Activated CD4-positive, alpha-beta memory T cell treated with anti-CD3 and anti-CD28 coated beads for 36 hours (primary cell): ENCODE measurements at regions of chr3 and their contacts with region 1.

Region 1: GRCh38 chr3:112043603-112044201 is 9.2 kb downstream of the TMPRSS7 start:
- DNase-seq: peak; percentile 62
- H3K4me3 Mint-ChIP-seq: no peak overlapping the region
- H3K27ac Mint-ChIP-seq: no peak overlapping the region
- H3K4me1 Mint-ChIP-seq: peaks cover 2% of the 10 kb centered on the region
- H3K27me3 Mint-ChIP-seq: no peaks in the 10 kb centered on the region

Region 2: DNA sequence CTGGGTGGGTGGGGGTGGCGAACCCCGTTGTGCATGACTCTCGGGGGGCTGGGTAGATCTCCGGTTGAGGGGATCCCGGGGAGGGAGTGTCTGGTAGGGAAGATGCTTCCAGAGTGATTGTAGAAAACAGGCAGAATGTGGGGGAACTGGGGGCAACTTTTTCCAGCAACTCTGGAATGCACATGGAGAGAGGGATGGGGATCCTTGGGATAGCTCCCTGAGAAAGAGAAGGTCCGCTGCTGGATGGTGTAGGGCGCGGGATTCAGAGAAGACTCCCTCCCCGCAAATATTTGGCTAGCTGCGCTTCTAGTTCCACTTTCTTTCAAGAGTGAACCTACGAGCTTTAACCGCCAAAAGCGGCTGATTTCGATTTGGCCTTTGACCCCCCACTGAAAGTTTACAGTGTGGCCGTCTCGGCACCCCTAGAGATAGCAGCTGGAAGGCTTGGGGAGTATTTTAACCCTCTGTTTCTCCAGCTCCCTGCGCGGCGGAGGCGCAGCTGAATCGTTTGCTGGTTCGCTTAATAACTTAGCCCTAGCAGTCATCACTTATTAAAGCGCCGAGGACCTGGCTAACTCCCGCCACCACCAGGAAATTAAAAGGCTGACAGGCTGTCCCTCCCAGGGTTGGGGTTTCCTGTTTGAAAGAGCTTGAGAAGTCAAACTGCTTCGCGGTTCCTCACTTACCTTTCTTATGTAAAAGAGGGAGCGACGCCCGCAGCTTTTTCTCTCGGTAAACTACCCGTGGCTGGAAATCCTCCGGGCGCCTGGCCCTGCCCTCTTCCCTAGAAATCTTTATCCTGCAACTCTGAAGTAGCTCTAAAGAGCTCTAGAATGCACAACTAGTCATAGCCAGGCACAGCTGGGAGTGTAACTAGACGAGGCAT is 183.5 kb before region 1 on chr3:
- CTCF ChIA-PET with region 1: interaction called, 5 read pairs
- POLR2A ChIA-PET with region 1: no interaction called
- intact Hi-C with region 1: loop called (anchors 10 kb)
- DNase-seq: peak; percentile 71
- H3K4me3 Mint-ChIP-seq: peak overlapping the region; percentile 79
- H3K27ac Mint-ChIP-seq: no peak overlapping the region
- H3K4me1 Mint-ChIP-seq: peaks cover 13% of the 10 kb centered on the region
- H3K27me3 Mint-ChIP-seq: peaks cover 7% of the 10 kb centered on the region

Region 3: GRCh38 chr3:111998636-111999483 is 44.8 kb before region 1 on chr3 and contains the start of gene TAGLN3:
- CTCF ChIA-PET with region 1: interaction called, 4 read pairs
- POLR2A ChIA-PET with region 1: interaction called, 3 read pairs
- intact Hi-C with region 1: loop called (anchors 5 kb)
- DNase-seq: no peak
- H3K4me3 Mint-ChIP-seq: peak within 1 kb of the TSS; percentile 34
- H3K27ac Mint-ChIP-seq: no peak within 1 kb of the TSS
- H3K4me1 Mint-ChIP-seq: peaks cover 39% of the 10 kb centered on the region
- H3K27me3 Mint-ChIP-seq: no peaks in the 10 kb centered on the region
- total RNA-seq, gene TAGLN3: 0.78 to 0.85 TPM

Region 4: GRCh38 chr3:112020674-112021085 is 23.0 kb before region 1 on chr3:
- CTCF ChIA-PET with region 1: interaction called, 50 read pairs
- POLR2A ChIA-PET with region 1: no interaction called
- intact Hi-C with region 1: loop called (anchors 2 kb)
- DNase-seq: no peak
- H3K4me3 Mint-ChIP-seq: no peak overlapping the region
- H3K27ac Mint-ChIP-seq: no peak overlapping the region
- H3K4me1 Mint-ChIP-seq: peaks cover 4% of the 10 kb centered on the region
- H3K27me3 Mint-ChIP-seq: no peaks in the 10 kb centered on the region

Region 5: GRCh38 chr3:112056451-112056978 is 12.8 kb after region 1 on chr3:
- CTCF ChIA-PET with region 1: interaction called, 16 read pairs
- POLR2A ChIA-PET with region 1: no interaction called
- intact Hi-C with region 1: no loop called
- DNase-seq: peak; percentile 53
- H3K4me3 Mint-ChIP-seq: peak overlapping the region; percentile 1
- H3K27ac Mint-ChIP-seq: peak overlapping the region; percentile 25
- H3K4me1 Mint-ChIP-seq: peaks cover 25% of the 10 kb centered on the region
- H3K27me3 Mint-ChIP-seq: peaks cover 11% of the 10 kb centered on the region

Region 6: DNA sequence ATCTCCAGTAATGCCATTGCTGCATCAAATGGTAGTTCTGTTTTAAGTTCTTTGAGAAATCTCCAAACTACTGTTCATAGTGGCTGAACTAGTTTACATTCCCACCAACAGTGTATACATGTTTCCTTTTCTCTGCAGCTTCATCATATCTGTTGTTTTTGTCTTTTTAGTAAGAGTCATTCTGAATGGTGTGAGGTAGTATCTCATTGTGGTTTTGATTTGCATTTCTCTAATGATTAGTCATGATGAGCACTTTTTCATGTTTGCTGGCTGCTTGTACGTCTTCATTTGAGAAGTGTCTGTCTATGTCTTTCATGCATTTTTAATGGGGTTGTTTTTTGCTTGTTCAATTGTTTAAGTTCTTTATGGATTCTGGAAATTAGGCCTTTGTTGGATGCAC is 99.5 kb after region 1 on chr3:
- CTCF ChIA-PET with region 1: no interaction called
- POLR2A ChIA-PET with region 1: no interaction called
- intact Hi-C with region 1: no loop called
- DNase-seq: no peak
- H3K4me3 Mint-ChIP-seq: peak overlapping the region; percentile 53
- H3K27ac Mint-ChIP-seq: peak overlapping the region; percentile 77
- H3K4me1 Mint-ChIP-seq: peaks cover 30% of the 10 kb centered on the region
- H3K27me3 Mint-ChIP-seq: no peaks in the 10 kb centered on the region

Region 7: DNA sequence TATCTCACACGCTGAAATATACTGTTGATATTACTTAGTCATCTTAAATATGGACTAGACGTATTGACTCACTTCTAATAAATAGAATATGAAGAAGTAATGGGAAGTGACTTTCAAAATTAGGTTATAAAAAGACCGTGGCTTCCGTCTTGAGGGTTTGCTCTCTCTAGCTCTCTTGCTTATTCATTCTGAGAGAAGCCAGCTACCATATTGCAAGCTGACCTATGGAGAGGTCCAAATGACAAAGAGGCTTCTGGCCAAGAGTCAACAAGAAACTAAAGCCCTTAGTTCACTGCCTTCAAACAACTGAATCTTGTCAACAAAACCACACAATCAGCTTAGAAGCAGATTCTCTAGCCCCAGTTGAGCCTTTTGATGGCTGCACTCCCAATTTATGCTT is 204.2 kb after region 1 on chr3:
- CTCF ChIA-PET with region 1: no interaction called
- POLR2A ChIA-PET with region 1: no interaction called
- intact Hi-C with region 1: no loop called
- DNase-seq: no peak
- H3K4me3 Mint-ChIP-seq: no peak overlapping the region
- H3K27ac Mint-ChIP-seq: no peak overlapping the region
- H3K4me1 Mint-ChIP-seq: no peaks in the 10 kb centered on the region
- H3K27me3 Mint-ChIP-seq: peaks cover 4% of the 10 kb centered on the region